ENCODE measurements at regions of chr22 and their contacts with region 1.

Region 1: GRCh38 chr22:20116951-20117645 is at the start of gene TRMT2A:
- DNase-seq: peak; percentile 98
- H3K4me3 Mint-ChIP-seq: peak within 1 kb of the TSS; percentile 91
- H3K27ac Mint-ChIP-seq: peak within 1 kb of the TSS; percentile 94
- H3K4me1 Mint-ChIP-seq: peaks cover 49% of the 10 kb centered on the region
- H3K27me3 Mint-ChIP-seq: no peaks in the 10 kb centered on the region
- total RNA-seq, gene TRMT2A: 51.8 to 57.9 TPM

Region 2: DNA sequence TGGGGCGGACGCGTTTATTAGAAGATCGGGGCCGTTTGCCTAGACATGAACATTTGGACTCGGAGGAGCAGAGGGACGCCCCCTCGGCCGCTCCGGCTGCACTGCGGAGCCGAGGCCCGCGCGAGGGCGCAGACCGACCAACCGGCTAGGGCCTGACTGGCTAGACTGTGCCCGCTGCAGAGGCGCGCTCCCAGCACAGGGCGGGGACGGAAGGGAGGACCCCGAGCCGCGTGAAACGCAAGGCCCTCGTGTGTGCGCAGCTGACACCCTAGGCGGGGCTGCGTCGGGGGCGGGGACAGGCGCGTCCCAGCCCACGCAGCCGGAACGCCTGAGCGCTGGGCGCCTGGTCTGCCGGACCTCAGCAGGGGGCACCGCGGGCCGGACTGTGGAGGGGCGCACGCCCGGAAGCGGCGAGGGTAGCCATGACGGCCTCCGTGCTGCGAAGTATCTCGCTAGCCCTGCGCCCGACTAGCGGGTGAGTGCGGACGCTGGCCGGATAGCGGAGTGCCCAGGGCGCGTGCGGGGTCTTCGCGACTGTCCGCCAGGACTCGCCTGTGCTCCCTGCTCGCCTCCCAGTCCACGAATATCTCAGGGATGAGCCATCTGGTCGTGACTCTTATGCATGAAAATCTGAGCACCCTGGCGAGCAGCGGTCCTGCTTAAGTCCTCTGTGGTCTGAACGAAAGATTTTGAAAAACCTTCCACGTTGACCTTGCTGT is 684.8 kb before region 1 on chr22 and contains the start of gene MRPL40:
- CTCF ChIA-PET with region 1: no interaction called
- intact Hi-C with region 1: loop called (anchors 5 kb)
- DNase-seq: peak; percentile 92
- H3K4me3 Mint-ChIP-seq: peak within 1 kb of the TSS; percentile 73
- H3K27ac Mint-ChIP-seq: peak within 1 kb of the TSS; percentile 88
- H3K4me1 Mint-ChIP-seq: peaks cover 44% of the 10 kb centered on the region
- H3K27me3 Mint-ChIP-seq: no peaks in the 10 kb centered on the region
- total RNA-seq, gene MRPL40: 32.6 to 34.9 TPM

Region 3: DNA sequence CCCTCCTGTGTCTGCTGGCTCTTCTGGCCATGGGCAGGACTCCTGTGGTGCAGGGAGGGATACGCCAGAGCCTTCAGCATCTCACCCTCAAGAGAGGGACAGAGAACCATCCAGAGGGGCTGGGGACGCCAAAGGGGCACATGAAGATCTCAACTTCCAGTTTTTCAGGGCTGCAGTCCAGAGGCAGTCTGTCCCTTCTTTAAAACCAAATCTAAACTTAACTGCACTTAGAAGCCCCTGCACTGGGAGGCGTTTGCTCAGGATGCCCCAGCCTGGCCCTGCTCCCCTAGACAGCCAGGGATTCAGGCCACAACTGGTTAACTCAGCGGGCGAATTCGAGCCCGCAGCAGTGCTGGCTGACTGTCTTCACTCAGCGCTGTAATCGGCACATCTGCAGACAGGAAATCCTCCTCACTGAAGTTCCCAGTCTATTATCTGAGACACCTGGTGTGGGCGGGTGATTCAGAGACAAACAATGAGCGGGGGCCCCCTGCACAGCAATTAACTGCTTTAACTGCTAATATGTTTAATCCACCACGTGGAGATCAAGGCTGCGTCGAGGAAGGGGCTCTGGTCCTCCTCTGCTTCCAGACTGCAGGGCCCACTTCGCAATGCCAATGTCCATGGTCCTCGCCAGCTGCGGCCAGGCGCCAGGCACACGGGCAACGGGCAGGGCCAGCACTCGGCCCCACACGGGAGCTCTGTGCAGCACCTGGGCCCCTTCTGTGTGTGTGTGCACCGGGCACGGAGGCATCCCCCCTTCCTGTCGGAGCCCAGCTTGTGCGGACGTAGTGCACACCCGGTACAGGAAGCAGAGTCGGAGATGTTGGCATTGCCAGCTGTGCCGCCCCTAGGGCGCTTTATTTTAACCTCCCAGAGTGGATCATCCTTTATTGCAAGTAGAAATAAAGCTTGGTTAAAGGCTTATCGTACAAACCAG is 225.5 kb before region 1 on chr22:
- CTCF ChIA-PET with region 1: no interaction called
- intact Hi-C with region 1: loop called (anchors 2 kb)
- DNase-seq: peak; percentile 95
- H3K4me3 Mint-ChIP-seq: peak overlapping the region; percentile 74
- H3K27ac Mint-ChIP-seq: peak overlapping the region; percentile 95
- H3K4me1 Mint-ChIP-seq: peaks cover 80% of the 10 kb centered on the region
- H3K27me3 Mint-ChIP-seq: no peaks in the 10 kb centered on the region

Region 4: DNA sequence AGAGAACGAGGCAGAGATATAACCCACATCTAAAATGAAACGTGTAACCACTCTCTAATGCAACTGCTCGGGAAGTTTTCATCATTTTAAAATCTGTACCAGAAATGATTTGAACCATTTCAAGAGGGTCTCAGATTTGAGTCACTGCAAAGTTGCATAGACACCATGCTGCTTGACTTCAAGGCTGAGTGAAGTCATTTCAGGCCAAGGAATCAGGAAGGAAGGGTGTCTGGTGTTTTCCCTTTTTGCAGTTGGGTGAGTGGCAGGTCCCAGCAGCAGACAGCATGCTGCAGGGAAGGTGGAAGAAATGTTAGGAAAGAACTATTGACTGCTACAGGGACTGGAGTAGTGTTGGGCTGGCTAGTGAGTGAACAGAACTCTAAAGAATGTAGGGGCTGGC is 79.7 kb before region 1 on chr22:
- CTCF ChIA-PET with region 1: no interaction called
- intact Hi-C with region 1: loop called (anchors 1 kb)
- DNase-seq: peak; percentile 63
- H3K4me3 Mint-ChIP-seq: no peak overlapping the region
- H3K27ac Mint-ChIP-seq: peak overlapping the region; percentile 84
- H3K4me1 Mint-ChIP-seq: peaks cover 25% of the 10 kb centered on the region
- H3K27me3 Mint-ChIP-seq: no peaks in the 10 kb centered on the region

Region 5: GRCh38 chr22:20102203-20102780 is 14.8 kb before region 1 on chr22:
- CTCF ChIA-PET with region 1: interaction called, 5 read pairs
- intact Hi-C with region 1: loop called (anchors 1 kb)
- DNase-seq: no peak
- H3K4me3 Mint-ChIP-seq: no peak overlapping the region
- H3K27ac Mint-ChIP-seq: peak overlapping the region; percentile 4
- H3K4me1 Mint-ChIP-seq: peaks cover 46% of the 10 kb centered on the region
- H3K27me3 Mint-ChIP-seq: no peaks in the 10 kb centered on the region

Region 6: GRCh38 chr22:20268279-20269012 is 151.3 kb after region 1 on chr22 and contains the start of gene RTN4R:
- CTCF ChIA-PET with region 1: no interaction called
- intact Hi-C with region 1: loop called (anchors 2 kb)
- DNase-seq: peak; percentile 65
- H3K4me3 Mint-ChIP-seq: peak within 1 kb of the TSS; percentile 66
- H3K27ac Mint-ChIP-seq: no peak within 1 kb of the TSS
- H3K4me1 Mint-ChIP-seq: peaks cover 4% of the 10 kb centered on the region
- H3K27me3 Mint-ChIP-seq: no peaks in the 10 kb centered on the region
- total RNA-seq, gene RTN4R: 2.1 to 2.5 TPM